ENCODE measurements at regions of chr5 and their contacts with region 1.

Region 1: DNA sequence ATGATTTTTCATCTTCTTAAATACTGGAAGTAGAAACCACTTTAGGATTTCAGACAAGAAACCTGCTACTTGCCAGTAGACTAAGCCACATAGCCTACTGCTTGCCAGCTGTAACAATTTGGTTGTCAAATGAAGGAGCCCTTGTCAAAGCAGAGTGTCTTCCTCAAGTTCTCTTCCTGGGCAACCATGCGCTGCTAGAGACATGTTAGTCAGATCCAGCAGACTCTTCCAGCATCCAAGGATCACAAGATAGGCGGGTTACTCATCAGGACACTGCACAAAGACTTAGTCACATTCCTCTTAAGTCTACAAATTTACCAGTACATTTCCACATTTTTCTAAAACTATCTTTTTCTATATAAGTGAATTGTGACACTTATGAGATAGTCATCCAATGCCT is 24.4 kb downstream of the SKIC3 start:
- DNase-seq: no peak
- H3K4me3 ChIP-seq: no peak overlapping the region
- H3K27ac ChIP-seq: no peak overlapping the region
- H3K4me1 ChIP-seq: peaks cover 0 to 6% (median 1%) of the 10 kb centered on the region in 4 donors
- H3K27me3 ChIP-seq: no peaks in the 10 kb centered on the region
- CTCF ChIP-seq: no peak
- EP300 ChIP-seq: no peak
- POLR2A ChIP-seq: no peak

Region 2: DNA sequence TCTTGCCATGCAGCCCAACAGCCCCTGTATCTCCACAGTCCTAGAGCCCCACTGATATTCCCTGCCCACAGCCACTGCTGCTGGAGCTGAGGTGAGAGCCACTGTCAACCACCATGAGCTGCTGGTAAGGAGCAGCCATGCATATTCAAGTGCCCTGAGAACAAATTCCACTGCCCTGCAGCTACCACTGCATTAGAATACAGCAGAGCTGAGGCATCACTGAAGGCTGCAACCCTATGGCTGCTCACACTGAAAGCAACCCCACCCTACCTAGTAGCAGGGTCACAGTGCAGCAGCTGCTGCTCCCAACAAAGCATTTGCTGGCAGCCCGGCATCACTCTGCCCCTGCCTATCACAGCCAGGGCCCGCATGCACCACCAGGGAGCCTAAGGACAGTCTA is 44.2 kb before region 1 on chr5:
- intact Hi-C with region 1: loop called (anchors 10 kb)
- DNase-seq: no peak
- H3K4me3 ChIP-seq: no peak overlapping the region
- H3K27ac ChIP-seq: no peak overlapping the region
- H3K4me1 ChIP-seq: no peaks in the 10 kb centered on the region
- H3K27me3 ChIP-seq: no peaks in the 10 kb centered on the region
- CTCF ChIP-seq: no peak
- EP300 ChIP-seq: no peak
- POLR2A ChIP-seq: no peak

Measured in esophagus muscularis mucosa (tissue), 4 donors.